Activated CD4-positive, alpha-beta T cell treated with anti-CD3 and anti-CD28 coated beads, Interleukin-2, amount 10 ng/mL, durations not matched to agents 24 days and 14 days (primary cell): ENCODE measurements at regions of chr14 and their contacts with region 1.

Region 1: DNA sequence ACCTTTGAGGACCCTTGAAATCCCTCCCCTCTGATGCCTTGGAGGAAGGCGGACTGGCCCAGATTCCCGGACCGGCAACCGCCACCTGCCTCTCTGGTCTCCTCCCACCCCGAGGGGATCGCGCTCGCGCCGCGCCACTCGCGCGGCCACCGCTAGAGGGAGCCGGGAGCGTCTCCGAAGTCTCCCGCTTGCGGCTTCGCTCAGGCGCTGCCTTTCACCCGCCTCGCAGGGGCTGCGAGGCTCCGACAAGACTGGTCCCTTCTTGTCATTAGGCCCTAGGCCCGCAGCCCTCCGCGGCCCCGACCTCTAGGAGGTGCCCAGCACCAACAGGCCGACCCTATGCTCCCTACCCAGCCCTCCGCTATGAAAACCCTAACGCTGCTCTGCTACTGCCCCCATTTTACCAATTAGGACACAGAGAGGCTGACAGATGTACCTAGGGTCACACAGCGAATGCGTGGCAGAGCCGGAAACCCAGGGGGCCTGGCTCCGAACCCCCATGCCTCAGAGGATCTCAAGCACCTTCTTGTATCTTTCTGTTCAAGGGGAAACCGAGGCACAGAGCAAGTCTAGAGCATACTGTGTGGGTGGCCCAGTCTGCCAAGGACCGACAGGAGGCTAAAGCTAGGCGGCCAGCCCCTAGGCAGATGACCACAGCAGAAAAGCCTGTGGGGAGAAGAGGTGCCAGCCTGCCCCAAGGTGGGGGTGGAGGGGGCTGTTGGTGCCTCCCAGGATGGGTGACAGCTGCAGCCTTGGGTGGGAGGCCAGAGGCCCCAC is 21.4 kb upstream of the VSX2 start:
- DNase-seq: peak; percentile 93
- H3K4me3 Mint-ChIP-seq: peak overlapping the region; percentile 41
- H3K27ac Mint-ChIP-seq: no peak overlapping the region
- H3K4me1 Mint-ChIP-seq: no peaks in the 10 kb centered on the region
- H3K27me3 Mint-ChIP-seq: peaks cover 16% of the 10 kb centered on the region

Region 2: DNA sequence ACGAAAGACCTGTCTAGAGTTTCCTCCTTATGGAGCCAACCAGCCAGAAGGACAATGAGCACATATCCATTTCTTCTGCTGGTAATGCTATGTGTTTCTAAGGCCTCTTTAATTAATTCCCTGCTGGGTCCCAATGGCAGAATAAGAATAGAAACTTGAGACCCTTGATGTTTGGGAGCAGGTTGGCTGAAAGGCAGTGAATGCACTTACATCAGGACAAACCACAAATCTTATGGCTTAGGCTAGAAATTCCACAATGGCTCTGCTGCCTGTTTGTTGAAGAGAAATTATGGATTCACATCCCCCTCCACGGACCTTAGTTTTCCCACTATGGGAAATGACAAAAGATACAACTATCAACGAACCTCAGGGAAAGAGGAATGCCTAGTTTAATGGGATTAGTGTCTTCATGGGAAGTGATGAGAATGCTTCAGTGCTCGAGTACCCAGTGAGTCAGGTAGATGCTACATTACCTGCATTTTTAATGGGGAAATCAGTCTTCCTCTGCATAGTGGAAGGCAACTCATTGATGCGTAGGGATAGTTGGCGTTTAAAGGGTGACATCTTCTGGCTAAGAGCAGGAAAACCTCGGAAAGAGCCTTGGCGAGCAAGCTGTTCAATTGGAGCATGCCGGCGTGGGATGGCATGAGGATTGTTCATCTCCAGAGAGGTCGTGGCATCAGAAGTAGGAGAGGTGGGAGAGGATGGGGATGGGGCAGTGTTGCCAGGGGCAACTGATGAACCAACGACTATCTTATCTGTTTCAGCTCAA is 934.1 kb before region 1 on chr14:
- intact Hi-C with region 1: no loop called
- DNase-seq: no peak
- H3K4me3 Mint-ChIP-seq: no peak overlapping the region
- H3K27ac Mint-ChIP-seq: no peak overlapping the region
- H3K4me1 Mint-ChIP-seq: peaks cover 3% of the 10 kb centered on the region
- H3K27me3 Mint-ChIP-seq: no peaks in the 10 kb centered on the region

Region 3: DNA sequence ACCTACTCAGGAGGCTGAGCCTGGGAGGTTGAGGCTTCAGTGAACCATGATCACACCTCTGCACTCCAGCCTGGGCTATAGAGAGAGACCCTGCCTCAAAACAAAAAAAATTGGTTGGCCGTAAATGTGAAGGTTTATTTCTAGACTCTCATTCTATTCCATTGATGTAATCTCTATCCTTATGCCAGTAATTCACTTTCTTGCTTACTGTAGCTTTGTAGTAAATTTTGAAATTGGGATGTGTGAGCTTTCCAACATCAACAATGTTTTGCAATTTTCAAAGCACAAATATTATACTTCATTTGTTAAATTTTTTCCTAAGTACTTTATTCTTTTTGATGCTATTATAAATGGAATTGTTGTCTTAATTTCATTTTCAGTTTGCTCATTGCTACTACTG is 108.5 kb before region 1 on chr14:
- intact Hi-C with region 1: loop called (anchors 1 kb)
- DNase-seq: no peak
- H3K4me3 Mint-ChIP-seq: no peak overlapping the region
- H3K27ac Mint-ChIP-seq: no peak overlapping the region
- H3K4me1 Mint-ChIP-seq: peaks cover 3% of the 10 kb centered on the region
- H3K27me3 Mint-ChIP-seq: no peaks in the 10 kb centered on the region

Region 4: GRCh38 chr14:74249433-74250375 is 31.8 kb after region 1 on chr14:
- intact Hi-C with region 1: loop called (anchors 1 kb)
- DNase-seq: no peak
- H3K4me3 Mint-ChIP-seq: no peak overlapping the region
- H3K27ac Mint-ChIP-seq: no peak overlapping the region
- H3K4me1 Mint-ChIP-seq: peaks cover 6% of the 10 kb centered on the region
- H3K27me3 Mint-ChIP-seq: peaks cover 45% of the 10 kb centered on the region